ENCODE measurements at regions of chr17 and their contacts with region 1.

Region 1: DNA sequence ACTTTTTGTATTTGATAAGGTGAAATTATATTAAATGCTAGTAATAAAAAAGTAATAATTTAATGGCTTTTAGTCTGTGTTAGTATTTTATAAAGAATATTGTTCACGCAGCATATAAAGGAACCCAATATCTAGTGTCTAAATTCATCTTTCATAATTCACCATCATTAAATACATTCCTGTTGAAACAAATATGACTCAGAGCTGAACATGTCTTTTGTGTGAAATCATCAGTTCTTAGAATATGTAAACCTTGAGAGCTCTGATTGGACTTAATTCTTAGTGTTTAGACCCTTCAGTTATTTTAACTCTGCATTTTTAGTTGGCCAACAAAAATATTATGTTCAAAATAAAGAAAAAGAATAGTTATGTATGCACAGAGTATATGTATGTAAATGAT is 71.8 kb downstream of the ABHD15 start:
- DNase-seq: no peak
- H3K4me3 ChIP-seq: no peak overlapping the region
- H3K4me3 Mint-ChIP-seq: no peak overlapping the region
- H3K27ac ChIP-seq: no peak overlapping the region
- H3K27ac Mint-ChIP-seq: no peak overlapping the region
- H3K4me1 ChIP-seq: no peaks in the 10 kb centered on the region
- H3K4me1 Mint-ChIP-seq: peaks cover 0 to 4% (median 0%) of the 10 kb centered on the region in 3 donors
- H3K27me3 ChIP-seq: no peaks in the 10 kb centered on the region
- H3K27me3 Mint-ChIP-seq: no peaks in the 10 kb centered on the region

Region 2: GRCh38 chr17:29420128-29420527 is 74.9 kb before region 1 on chr17:
- CTCF ChIA-PET with region 1: no interaction called
- POLR2A ChIA-PET with region 1: no interaction called
- DNase-seq: no peak
- H3K4me3 ChIP-seq: no peak overlapping the region
- H3K4me3 Mint-ChIP-seq: no peak overlapping the region
- H3K27ac ChIP-seq: no peak overlapping the region
- H3K27ac Mint-ChIP-seq: peak overlapping the region in 1 of 8 donors; percentile 66
- H3K4me1 ChIP-seq: no peaks in the 10 kb centered on the region
- H3K4me1 Mint-ChIP-seq: peaks cover 23 to 47% (median 31%) of the 10 kb centered on the region in 3 donors
- H3K27me3 ChIP-seq: no peaks in the 10 kb centered on the region
- H3K27me3 Mint-ChIP-seq: no peaks in the 10 kb centered on the region

Region 3: GRCh38 chr17:29524460-29525091 is 29.6 kb after region 1 on chr17:
- CTCF ChIA-PET with region 1: no interaction called
- POLR2A ChIA-PET with region 1: interaction called, 10 read pairs
- DNase-seq: no peak
- H3K4me3 ChIP-seq: no peak overlapping the region
- H3K4me3 Mint-ChIP-seq: no peak overlapping the region
- H3K27ac ChIP-seq: no peak overlapping the region
- H3K27ac Mint-ChIP-seq: peak overlapping the region in 3 of 8 donors; percentile 11 to 56 (median 32)
- H3K4me1 ChIP-seq: no peaks in the 10 kb centered on the region
- H3K4me1 Mint-ChIP-seq: no peaks in the 10 kb centered on the region
- H3K27me3 ChIP-seq: no peaks in the 10 kb centered on the region
- H3K27me3 Mint-ChIP-seq: no peaks in the 10 kb centered on the region